Activated CD4-positive, alpha-beta T cell treated with anti-CD3 and anti-CD28 coated beads for 36 hours (primary cell): ENCODE measurements at regions of chr6 and their contacts with region 1.

Region 1: GRCh38 chr6:1609648-1610496 is at the start of gene FOXC1:
- DNase-seq: peak; percentile 70
- ATAC-seq: peak; percentile 47
- H3K4me3 Mint-ChIP-seq: peak within 1 kb of the TSS; percentile 60
- H3K27ac Mint-ChIP-seq: no peak within 1 kb of the TSS
- H3K4me1 Mint-ChIP-seq: peaks cover 47% of the 10 kb centered on the region
- H3K27me3 Mint-ChIP-seq: peaks cover 58% of the 10 kb centered on the region
- total RNA-seq, gene FOXC1: 0.04 to 0.05 TPM

Region 2: DNA sequence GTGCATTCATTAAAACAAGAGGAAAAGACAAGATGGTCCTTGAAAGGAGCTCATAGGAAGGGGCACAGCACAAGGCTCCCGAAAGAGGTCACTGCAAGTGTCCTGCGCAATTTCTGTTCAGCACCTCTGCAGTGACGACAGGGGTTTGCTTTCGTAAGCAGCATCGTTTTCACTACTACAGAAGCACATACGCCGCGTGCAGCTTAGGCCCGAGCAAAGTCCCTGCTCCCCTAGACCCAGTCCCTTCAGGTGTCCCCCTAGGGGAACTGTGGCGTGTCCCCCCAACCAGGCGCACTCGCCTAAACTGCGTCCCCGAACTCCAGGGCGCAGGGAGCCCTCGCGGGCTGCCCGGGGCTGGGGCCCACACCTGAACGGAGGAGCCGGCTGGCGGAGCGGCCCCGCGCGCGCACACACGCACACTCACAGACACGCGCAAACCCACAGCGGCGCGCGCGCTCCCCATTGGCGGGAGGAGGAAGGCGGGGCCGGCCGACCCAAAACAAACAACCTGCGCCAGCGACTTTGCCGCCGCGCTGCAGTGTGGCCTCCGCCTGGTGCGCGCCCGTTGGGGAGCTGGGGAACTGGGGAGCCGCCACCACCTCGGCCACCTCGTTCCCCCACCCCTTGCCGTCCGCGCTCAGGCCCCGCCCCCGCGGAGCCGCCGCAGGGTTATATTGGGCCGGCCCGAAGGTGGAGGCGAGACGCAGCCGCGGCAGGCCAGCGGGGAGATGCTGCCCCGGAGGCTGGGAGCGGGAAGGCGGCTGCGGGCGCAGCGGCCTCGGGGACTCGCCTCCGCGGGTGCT is 298.3 kb before region 1 on chr6 and contains the start of gene FOXQ1:
- CTCF ChIA-PET with region 1: no interaction called
- POLR2A ChIA-PET with region 1: no interaction called
- intact Hi-C with region 1: loop called in 1 of 2 experiments (anchors 5 kb)
- DNase-seq: peak; percentile 41
- ATAC-seq: peak; percentile 12
- H3K4me3 Mint-ChIP-seq: peak within 1 kb of the TSS; percentile 53
- H3K27ac Mint-ChIP-seq: no peak within 1 kb of the TSS
- H3K4me1 Mint-ChIP-seq: peaks cover 24% of the 10 kb centered on the region
- H3K27me3 Mint-ChIP-seq: peaks cover 65% of the 10 kb centered on the region
- total RNA-seq, gene FOXQ1: not detected

Region 3: GRCh38 chr6:1389369-1390132 is 220.3 kb before region 1 on chr6 and contains the start of gene FOXF2:
- CTCF ChIA-PET with region 1: interaction called, 4 read pairs
- POLR2A ChIA-PET with region 1: no interaction called
- intact Hi-C with region 1: loop called (anchors 2 to 5 kb)
- DNase-seq: no peak
- ATAC-seq: no peak
- H3K4me3 Mint-ChIP-seq: peak within 1 kb of the TSS; percentile 56
- H3K27ac Mint-ChIP-seq: no peak within 1 kb of the TSS
- H3K4me1 Mint-ChIP-seq: peaks cover 17% of the 10 kb centered on the region
- H3K27me3 Mint-ChIP-seq: peaks cover 76% of the 10 kb centered on the region
- total RNA-seq, gene FOXF2: not detected

Region 4: GRCh38 chr6:1596088-1596852 is 13.6 kb before region 1 on chr6:
- CTCF ChIA-PET with region 1: interaction called, 17 read pairs
- POLR2A ChIA-PET with region 1: no interaction called
- intact Hi-C with region 1: no loop called
- DNase-seq: peak; percentile 78
- ATAC-seq: peak; percentile 88
- H3K4me3 Mint-ChIP-seq: no peak overlapping the region
- H3K27ac Mint-ChIP-seq: no peak overlapping the region
- H3K4me1 Mint-ChIP-seq: peaks cover 2% of the 10 kb centered on the region
- H3K27me3 Mint-ChIP-seq: peaks cover 48% of the 10 kb centered on the region

Region 5: DNA sequence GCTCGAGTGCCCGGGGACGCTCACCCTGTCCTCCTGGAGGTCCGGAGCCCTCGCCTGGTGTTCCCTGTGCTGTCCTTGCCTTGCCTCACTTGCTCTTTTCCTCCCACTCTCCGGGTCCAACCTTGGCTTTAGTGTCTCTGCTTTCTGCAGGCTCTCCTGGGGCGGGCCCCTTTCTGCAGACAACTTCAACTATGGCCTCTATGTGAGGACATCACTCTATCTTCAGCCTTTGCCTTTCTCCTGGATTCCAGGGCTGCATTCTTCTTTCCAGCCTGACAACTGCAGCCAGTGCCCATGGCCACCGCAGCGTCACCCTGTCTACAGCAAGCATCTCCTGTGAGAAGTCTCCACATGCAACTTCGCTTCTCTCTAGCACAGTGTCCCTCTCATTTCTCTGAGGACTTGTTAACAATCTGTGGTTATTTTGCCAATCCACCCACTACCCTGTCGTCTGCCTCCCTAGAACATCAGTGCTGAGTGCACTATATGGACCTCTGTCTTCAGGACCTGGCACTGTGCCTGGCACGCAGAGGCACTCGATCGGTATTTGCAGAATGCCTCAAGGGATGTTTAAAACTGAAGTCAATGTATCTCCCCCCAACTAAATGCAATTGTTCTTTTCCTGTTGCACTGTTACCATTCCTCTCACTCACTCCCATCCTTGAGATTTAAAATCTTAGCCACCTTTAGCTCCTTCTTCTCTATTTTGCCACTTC is 35.8 kb after region 1 on chr6:
- CTCF ChIA-PET with region 1: no interaction called
- POLR2A ChIA-PET with region 1: no interaction called
- intact Hi-C with region 1: no loop called
- DNase-seq: no peak
- ATAC-seq: no peak
- H3K4me3 Mint-ChIP-seq: no peak overlapping the region
- H3K27ac Mint-ChIP-seq: no peak overlapping the region
- H3K4me1 Mint-ChIP-seq: no peaks in the 10 kb centered on the region
- H3K27me3 Mint-ChIP-seq: no peaks in the 10 kb centered on the region

Region 6: DNA sequence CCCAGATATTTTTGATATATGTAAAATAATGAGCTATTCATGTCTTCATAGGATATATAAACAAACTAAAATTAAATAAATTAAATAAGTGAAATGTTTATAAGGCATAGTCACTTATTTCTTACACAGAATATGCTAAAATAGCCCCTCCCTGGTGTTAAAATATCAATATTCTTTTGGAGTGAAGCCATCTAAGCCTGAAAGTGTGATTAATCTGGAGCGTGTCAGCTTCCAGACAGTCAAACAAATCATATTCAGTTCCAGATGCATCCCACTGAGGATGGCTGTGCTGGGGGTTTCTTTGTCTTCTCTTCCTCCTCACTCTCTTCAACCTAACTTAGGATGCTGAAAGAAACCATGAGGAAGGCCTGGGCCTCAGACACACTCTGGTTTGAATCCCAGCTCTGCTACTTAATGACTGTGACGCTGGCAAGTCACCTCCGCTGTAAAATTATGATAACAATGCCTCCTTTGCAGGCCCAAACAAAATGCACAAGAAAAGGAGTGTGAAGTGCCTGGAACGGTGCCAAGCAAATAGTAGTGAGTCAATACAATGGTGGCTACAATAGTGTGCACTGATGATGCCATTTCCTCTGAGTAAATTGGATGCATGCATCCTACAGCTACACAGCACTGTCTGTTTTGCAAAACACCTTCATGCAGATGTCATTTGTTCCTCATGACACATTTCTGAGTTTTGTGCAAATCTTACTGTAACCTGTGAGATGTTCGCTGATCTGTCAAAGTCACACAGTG is 161.3 kb after region 1 on chr6:
- CTCF ChIA-PET with region 1: no interaction called
- POLR2A ChIA-PET with region 1: no interaction called
- intact Hi-C with region 1: loop called in 1 of 2 experiments (anchors 5 kb)
- DNase-seq: peak; percentile 79
- ATAC-seq: peak; percentile 94
- H3K4me3 Mint-ChIP-seq: no peak overlapping the region
- H3K27ac Mint-ChIP-seq: peak overlapping the region; percentile 85
- H3K4me1 Mint-ChIP-seq: peaks cover 55% of the 10 kb centered on the region
- H3K27me3 Mint-ChIP-seq: no peaks in the 10 kb centered on the region

Region 7: DNA sequence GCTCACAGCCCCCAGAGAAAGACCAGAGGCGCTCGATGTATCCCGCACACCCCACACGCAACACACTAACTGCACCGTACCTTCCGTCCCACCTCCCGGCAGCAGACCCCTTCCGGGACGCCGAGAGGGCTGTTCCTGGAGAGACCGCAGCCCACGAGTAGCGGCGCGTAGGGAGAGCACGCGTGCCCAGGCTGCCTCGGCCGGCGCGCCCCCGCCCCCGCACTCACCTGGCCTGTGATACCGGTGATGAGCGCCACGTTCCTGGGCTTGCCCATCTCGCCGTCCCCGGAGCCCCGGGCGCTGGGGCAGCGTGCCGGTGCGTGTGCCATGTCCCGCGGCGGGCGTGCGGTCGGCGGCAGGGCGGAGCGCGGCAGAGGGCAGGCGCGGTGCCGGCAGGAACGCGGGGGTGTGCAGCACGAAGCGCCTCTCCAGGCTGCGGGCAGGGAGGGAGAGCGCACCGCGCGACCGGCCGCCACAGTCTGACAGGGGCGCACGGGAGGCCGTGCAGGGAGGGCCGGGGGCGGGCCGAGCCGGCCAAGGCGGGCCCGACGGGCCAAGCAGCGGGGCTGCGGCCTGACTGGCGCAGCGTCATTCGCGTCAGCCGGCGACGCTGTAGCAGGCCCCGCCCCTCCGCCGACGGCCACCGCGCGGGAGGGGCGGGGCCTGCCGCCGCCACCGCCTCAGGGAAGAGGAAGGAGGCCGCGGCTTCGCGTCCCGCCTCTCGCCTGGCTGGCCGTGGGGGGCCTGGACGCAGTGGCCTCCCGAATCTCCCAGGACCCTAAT is 635.4 kb after region 1 on chr6 and contains the start of gene GMDS:
- CTCF ChIA-PET with region 1: no interaction called
- POLR2A ChIA-PET with region 1: no interaction called
- intact Hi-C with region 1: loop called in 1 of 2 experiments (anchors 5 kb)
- DNase-seq: peak; percentile 89
- ATAC-seq: peak; percentile 94
- H3K4me3 Mint-ChIP-seq: peak within 1 kb of the TSS; percentile 91
- H3K27ac Mint-ChIP-seq: peak within 1 kb of the TSS; percentile 97
- H3K4me1 Mint-ChIP-seq: peaks cover 56% of the 10 kb centered on the region
- H3K27me3 Mint-ChIP-seq: no peaks in the 10 kb centered on the region
- total RNA-seq, gene GMDS: 33.2 to 33.5 TPM